Endothelial cell of umbilical vein (primary cell): ENCODE measurements at regions of chr16 and their contacts with region 1.

Region 1: GRCh38 chr16:85114909-85115567 is 2.8 kb upstream of the CIBAR2 start:
- DNase-seq: peak; percentile 86
- H3K4me3 ChIP-seq: no peak overlapping the region
- H3K27ac ChIP-seq: peak overlapping the region; percentile 9
- H3K4me1 ChIP-seq: no peaks in the 10 kb centered on the region
- H3K27me3 ChIP-seq: no peaks in the 10 kb centered on the region
- CTCF ChIP-seq: peak; percentile 98
- POLR2A ChIP-seq: no peak

Region 2: DNA sequence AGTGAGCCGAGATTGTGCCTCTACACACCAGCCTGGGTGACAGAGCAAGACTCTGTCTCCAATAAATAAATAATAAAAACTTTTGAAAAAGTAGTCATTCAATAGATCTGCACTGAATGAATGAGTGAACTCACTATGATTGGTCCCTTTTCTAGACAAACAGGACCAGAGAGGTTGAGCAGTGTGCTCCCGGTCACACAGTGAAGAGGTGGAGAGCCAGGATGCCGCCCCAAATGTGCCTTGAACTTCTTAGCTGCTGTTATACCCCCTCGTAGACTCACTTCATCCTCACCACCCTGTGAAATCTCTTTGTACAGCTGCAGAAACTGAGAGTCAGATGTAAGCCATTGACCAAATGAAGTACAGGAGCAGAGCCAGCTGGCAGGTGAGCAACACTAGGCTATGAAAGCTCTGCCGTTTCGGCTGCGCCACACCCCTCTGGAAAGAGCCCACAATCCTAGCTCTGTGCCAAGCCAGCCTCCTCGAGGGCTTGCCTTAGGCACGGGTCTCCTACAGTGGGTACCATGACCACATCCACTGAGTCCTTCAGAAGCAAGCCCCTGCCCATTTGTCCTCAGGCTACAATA is 95.3 kb before region 1 on chr16:
- CTCF ChIA-PET with region 1: no interaction called
- POLR2A ChIA-PET with region 1: no interaction called
- dilution Hi-C with region 1: no loop called
- intact Hi-C with region 1: no loop called
- DNase-seq: no peak
- H3K4me3 ChIP-seq: no peak overlapping the region
- H3K27ac ChIP-seq: no peak overlapping the region
- H3K4me1 ChIP-seq: peaks cover 4% of the 10 kb centered on the region
- H3K27me3 ChIP-seq: peaks cover 2 to 5% of the 10 kb centered on the region in 2 experiments
- CTCF ChIP-seq: no peak
- POLR2A ChIP-seq: no peak

Region 3: DNA sequence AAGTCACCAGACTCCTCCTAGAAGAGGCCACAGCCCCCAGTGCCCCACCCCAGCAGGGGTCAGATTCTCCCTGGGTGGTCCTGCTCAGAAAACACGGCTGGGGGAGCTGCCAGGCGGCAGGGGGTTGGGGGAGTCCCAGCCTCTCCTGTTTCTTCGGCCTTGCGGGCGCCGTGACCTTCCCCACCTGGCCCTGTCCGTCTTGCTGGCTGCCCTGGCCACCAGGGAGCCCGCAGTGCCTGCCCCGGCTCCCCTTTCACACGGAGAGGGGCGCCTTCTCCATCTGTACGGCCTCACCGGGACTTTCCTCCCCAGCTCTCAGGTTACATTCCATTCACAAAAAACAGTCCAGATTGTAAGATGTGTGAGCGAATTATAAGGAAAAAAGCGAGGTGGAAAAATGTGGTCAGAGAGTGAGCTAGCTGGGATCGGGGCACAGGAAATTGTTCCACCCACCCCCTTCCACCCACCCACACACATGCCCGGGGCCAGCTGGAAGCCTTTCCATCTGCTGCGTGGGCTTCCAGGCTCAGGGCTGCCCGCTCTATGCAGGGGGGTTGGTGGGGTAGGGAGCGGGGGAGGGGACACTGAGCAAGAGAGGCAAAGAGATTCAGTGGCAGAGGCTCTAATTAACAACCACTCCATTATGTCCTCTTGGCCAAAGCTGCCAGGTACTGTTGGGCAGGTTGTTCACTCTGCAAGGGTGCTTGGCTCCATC is 11.8 kb after region 1 on chr16:
- CTCF ChIA-PET with region 1: interaction called, 36 read pairs
- POLR2A ChIA-PET with region 1: no interaction called
- dilution Hi-C with region 1: no loop called
- intact Hi-C with region 1: no loop called
- DNase-seq: peak; percentile 88
- H3K4me3 ChIP-seq: no peak overlapping the region
- H3K27ac ChIP-seq: no peak overlapping the region
- H3K4me1 ChIP-seq: peaks cover 28% of the 10 kb centered on the region
- H3K27me3 ChIP-seq: no peaks in the 10 kb centered on the region
- CTCF ChIP-seq: no peak
- POLR2A ChIP-seq: no peak

Region 4: GRCh38 chr16:85172455-85173145 is 57.6 kb after region 1 on chr16:
- CTCF ChIA-PET with region 1: interaction called, 45 read pairs
- POLR2A ChIA-PET with region 1: no interaction called
- dilution Hi-C with region 1: no loop called
- intact Hi-C with region 1: loop called (anchors 2 kb)
- DNase-seq: peak; percentile 71
- H3K4me3 ChIP-seq: peak overlapping the region in 2 of 3 experiments; percentile 15 to 39
- H3K27ac ChIP-seq: peak overlapping the region; percentile 93
- H3K4me1 ChIP-seq: peaks cover 59% of the 10 kb centered on the region
- H3K27me3 ChIP-seq: no peaks in the 10 kb centered on the region
- CTCF ChIP-seq: peak; percentile 48 to 56
- POLR2A ChIP-seq: no peak

Region 5: GRCh38 chr16:85245307-85246172 is 130.5 kb after region 1 on chr16:
- CTCF ChIA-PET with region 1: interaction called, 34 read pairs
- POLR2A ChIA-PET with region 1: no interaction called
- dilution Hi-C with region 1: no loop called
- intact Hi-C with region 1: loop called (anchors 1 kb)
- DNase-seq: peak; percentile 53
- H3K4me3 ChIP-seq: no peak overlapping the region
- H3K27ac ChIP-seq: no peak overlapping the region
- H3K4me1 ChIP-seq: no peaks in the 10 kb centered on the region
- H3K27me3 ChIP-seq: no peaks in the 10 kb centered on the region
- CTCF ChIP-seq: peak; percentile 83 to 92
- POLR2A ChIP-seq: no peak

Region 6: DNA sequence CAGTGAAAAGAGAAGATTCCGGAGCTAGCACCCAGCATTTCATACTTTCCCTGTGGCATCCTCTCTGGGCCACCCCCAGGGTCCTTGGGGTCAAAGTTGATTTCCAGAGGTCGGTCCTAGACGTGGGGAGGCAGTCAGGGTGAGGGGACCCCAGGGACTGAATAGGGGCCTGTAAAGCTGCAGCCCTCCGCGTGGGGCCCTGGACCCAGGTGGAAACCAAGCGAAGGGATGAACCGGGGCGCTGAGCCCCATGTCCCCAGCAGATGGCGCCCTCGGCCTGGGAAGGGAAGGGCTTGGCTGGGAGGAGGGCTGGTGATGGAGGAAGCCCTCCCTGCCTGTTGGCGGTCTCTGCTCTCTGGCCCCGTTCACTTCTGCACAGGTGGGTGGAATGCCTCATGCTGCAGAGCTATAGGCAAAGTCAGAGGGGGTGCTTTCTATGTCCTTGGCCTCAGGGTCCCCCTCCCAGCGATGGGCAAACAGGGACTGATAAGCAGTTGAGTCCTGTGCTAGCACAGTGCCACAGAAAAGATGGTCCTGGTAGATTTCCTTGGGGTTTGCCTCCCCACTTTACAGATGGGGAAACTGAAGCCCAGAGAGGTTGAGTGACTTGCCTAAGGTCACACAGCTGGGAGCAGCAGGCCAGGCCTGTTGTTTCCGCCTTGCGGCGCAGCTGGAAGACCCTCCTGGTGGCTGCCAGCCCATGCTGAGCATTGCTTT is 160.7 kb after region 1 on chr16:
- CTCF ChIA-PET with region 1: interaction called, 31 read pairs
- POLR2A ChIA-PET with region 1: no interaction called
- dilution Hi-C with region 1: no loop called
- intact Hi-C with region 1: loop called (anchors 1 kb)
- DNase-seq: peak; percentile 51
- H3K4me3 ChIP-seq: no peak overlapping the region
- H3K27ac ChIP-seq: no peak overlapping the region
- H3K4me1 ChIP-seq: no peaks in the 10 kb centered on the region
- H3K27me3 ChIP-seq: no peaks in the 10 kb centered on the region
- CTCF ChIP-seq: peak; percentile 81 to 98
- POLR2A ChIP-seq: no peak

Region 7: DNA sequence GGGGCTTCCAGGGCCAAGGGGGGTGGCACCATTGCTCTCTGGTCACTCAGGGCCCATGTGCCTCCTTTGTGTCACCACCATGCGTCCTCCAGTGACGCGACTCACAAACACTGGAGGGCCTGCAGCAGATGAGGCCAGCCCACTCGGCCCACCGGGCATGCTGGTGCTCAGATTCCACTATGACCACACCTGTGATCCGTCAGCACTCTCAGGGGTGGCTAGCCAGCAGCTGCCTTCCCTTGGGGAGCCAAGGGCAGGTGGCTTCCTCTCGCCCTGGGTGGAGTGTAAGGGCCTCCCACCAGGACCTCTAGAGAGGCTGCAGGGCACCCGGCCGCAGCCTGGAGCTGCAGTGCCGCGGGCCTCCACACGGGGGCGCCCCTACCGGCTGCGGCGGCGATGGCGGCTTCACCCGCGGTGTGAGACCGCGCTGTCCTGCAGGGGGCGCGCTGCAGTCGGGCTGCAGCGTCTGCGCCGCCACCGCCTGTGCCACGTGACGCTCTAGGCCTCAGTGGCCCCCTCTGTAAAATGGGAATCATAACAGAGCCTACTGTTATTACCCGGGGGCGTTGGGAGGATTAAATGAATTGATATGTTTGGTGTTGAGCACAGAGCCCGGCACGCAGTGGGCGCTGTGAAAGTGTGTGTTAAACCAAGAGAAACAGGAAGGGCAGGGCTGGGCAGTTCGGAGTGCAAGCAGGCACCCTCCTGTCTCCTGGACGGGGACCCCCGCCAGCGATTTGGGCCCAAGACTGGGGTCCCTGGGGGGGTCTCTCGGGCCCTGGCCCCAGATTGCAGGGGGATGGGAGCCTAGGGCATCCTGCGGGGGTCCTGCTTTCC is 305.7 kb after region 1 on chr16:
- CTCF ChIA-PET with region 1: interaction called, 8 read pairs
- POLR2A ChIA-PET with region 1: no interaction called
- dilution Hi-C with region 1: no loop called
- intact Hi-C with region 1: loop called (anchors 5 kb)
- DNase-seq: peak; percentile 30
- H3K4me3 ChIP-seq: no peak overlapping the region
- H3K27ac ChIP-seq: no peak overlapping the region
- H3K4me1 ChIP-seq: no peaks in the 10 kb centered on the region
- H3K27me3 ChIP-seq: no peaks in the 10 kb centered on the region
- CTCF ChIP-seq: peak; percentile 96 to 100
- POLR2A ChIP-seq: no peak

Region 8: GRCh38 chr16:85615852-85616606 is 501.0 kb after region 1 on chr16:
- CTCF ChIA-PET with region 1: interaction called, 26 read pairs
- POLR2A ChIA-PET with region 1: no interaction called
- dilution Hi-C with region 1: no loop called
- intact Hi-C with region 1: no loop called
- DNase-seq: peak; percentile 49
- H3K4me3 ChIP-seq: no peak overlapping the region
- H3K27ac ChIP-seq: no peak overlapping the region
- H3K4me1 ChIP-seq: peaks cover 9% of the 10 kb centered on the region
- H3K27me3 ChIP-seq: no peaks in the 10 kb centered on the region
- CTCF ChIP-seq: peak; percentile 90 to 97
- POLR2A ChIP-seq: no peak